ENCODE measurements at regions of chr9 and their contacts with region 1.

Region 1: GRCh38 chr9:2158111-2158610 is 143.0 kb downstream of the SMARCA2 start:
- DNase-seq: no peak
- H3K4me3 ChIP-seq: peak overlapping the region; percentile 50
- CTCF ChIP-seq: no peak

Region 2: GRCh38 chr9:1989500-1989899 is 168.7 kb before region 1 on chr9:
- CTCF ChIA-PET with region 1: no interaction called
- POLR2A ChIA-PET with region 1: no interaction called
- DNase-seq: no peak
- H3K4me3 ChIP-seq: no peak overlapping the region
- CTCF ChIP-seq: no peak

Region 3: GRCh38 chr9:2145746-2146145 is 12.4 kb before region 1 on chr9:
- CTCF ChIA-PET with region 1: interaction called, 17 read pairs
- POLR2A ChIA-PET with region 1: no interaction called
- DNase-seq: no peak
- H3K4me3 ChIP-seq: no peak overlapping the region
- CTCF ChIP-seq: no peak

Region 4: DNA sequence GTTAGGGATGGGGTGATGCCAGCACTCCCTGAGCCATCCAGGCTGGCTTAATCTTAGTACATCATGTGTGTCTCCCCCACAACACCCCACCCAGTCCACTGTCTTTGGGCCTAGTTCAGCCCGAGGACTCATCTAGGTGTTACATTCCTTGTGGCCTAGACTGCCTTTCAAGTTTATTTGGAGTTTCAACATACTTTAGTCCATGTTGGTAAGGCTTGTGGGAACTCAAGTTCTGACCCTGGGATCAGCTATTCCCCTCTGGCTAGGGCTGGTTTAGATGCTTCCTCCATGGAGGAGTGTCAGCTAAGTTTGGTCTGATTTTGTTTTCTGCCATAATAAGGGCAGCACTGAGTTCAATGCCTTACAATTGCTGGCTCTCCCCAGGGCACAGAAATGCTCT is 159.4 kb after region 1 on chr9:
- CTCF ChIA-PET with region 1: no interaction called
- POLR2A ChIA-PET with region 1: no interaction called
- DNase-seq: no peak
- H3K4me3 ChIP-seq: no peak overlapping the region
- CTCF ChIP-seq: no peak

Region 5: GRCh38 chr9:2336055-2336454 is 177.9 kb after region 1 on chr9:
- CTCF ChIA-PET with region 1: no interaction called
- POLR2A ChIA-PET with region 1: no interaction called
- DNase-seq: no peak
- H3K4me3 ChIP-seq: no peak overlapping the region
- CTCF ChIP-seq: no peak

Region 6: GRCh38 chr9:2367973-2368372 is 209.8 kb after region 1 on chr9:
- CTCF ChIA-PET with region 1: no interaction called
- POLR2A ChIA-PET with region 1: no interaction called
- DNase-seq: no peak
- H3K4me3 ChIP-seq: no peak overlapping the region
- CTCF ChIP-seq: peak; percentile 6

Measured in AG04449 (cell line).